H1 (cell line): ENCODE measurements at regions of chr3 and their contacts with region 1.

Region 1: GRCh38 chr3:124653797-124654469 is 76.3 kb upstream of the UMPS start:
- DNase-seq: no peak
- H3K4me3 ChIP-seq: no peak overlapping the region
- H3K27ac ChIP-seq: no peak overlapping the region
- H3K4me1 ChIP-seq: peaks cover 0 to 3% (median 0%) of the 10 kb centered on the region in 4 experiments; a peak in 1 of 7 replicates
- H3K27me3 ChIP-seq: no peaks in the 10 kb centered on the region
- CTCF ChIP-seq: no peak
- EP300 ChIP-seq: no peak
- POLR2A ChIP-seq: no peak
- RAD21 ChIP-seq: no peak

Region 2: GRCh38 chr3:124634210-124635168 is 19.4 kb before region 1 on chr3:
- CTCF ChIA-PET with region 1: interaction called, 10 read pairs
- POLR2A ChIA-PET with region 1: no interaction called
- DNase-seq: no peak
- H3K4me3 ChIP-seq: no peak overlapping the region
- H3K27ac ChIP-seq: no peak overlapping the region
- H3K4me1 ChIP-seq: peaks cover 4 to 23% (median 13%) of the 10 kb centered on the region in 4 experiments
- H3K27me3 ChIP-seq: no peaks in the 10 kb centered on the region; a peak in 1 of 7 replicates
- CTCF ChIP-seq: no peak
- EP300 ChIP-seq: no peak
- POLR2A ChIP-seq: no peak
- RAD21 ChIP-seq: no peak

Region 3: GRCh38 chr3:124676236-124676635 is 22.3 kb after region 1 on chr3:
- CTCF ChIA-PET with region 1: no interaction called
- POLR2A ChIA-PET with region 1: no interaction called
- DNase-seq: no peak
- H3K4me3 ChIP-seq: no peak overlapping the region
- H3K27ac ChIP-seq: no peak overlapping the region
- H3K4me1 ChIP-seq: no peaks in the 10 kb centered on the region
- H3K27me3 ChIP-seq: no peaks in the 10 kb centered on the region
- CTCF ChIP-seq: no peak
- EP300 ChIP-seq: no peak
- POLR2A ChIP-seq: no peak
- RAD21 ChIP-seq: no peak